SK-N-SH (cell line): ENCODE measurements at regions of chr1 and their contacts with region 1.

Region 1: GRCh38 chr1:32051706-32052105 is 21.0 kb upstream of the TMEM39B start:
- DNase-seq: no peak
- H3K4me3 ChIP-seq: no peak overlapping the region
- H3K27ac ChIP-seq: peak overlapping the region in 1 of 2 experiments; percentile 7; a peak in 1 of 4 replicates
- H3K4me1 ChIP-seq: no peaks in the 10 kb centered on the region; a peak in 2 of 4 replicates
- H3K27me3 ChIP-seq: no peaks in the 10 kb centered on the region
- CTCF ChIP-seq: no peak
- EP300 ChIP-seq: no peak
- RAD21 ChIP-seq: no peak

Region 2: DNA sequence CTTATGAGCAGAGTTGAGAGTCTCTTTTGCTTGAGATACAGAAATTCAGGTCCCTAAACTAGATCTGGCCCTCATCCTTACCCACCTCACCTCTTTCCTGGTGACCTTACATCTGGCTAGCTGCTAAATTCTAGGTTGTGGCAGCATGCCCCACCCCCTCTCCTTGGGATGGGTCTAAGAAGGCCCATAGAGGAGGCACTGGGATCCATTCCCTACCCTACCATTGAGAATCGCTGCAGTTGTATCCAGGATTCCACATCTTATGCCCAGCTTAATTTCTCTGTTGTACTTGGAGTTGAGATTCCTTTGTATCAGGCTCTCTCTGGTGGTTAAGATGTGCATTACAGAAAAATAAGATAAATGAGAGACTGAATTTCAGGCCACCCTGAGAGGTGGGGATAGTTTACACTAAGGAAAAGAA is 11.6 kb after region 1 on chr1:
- CTCF ChIA-PET with region 1: interaction called, 10 read pairs
- POLR2A ChIA-PET with region 1: interaction called, 9 read pairs
- DNase-seq: peak; percentile 55
- H3K4me3 ChIP-seq: no peak overlapping the region
- H3K27ac ChIP-seq: peak overlapping the region; percentile 45 to 88
- H3K4me1 ChIP-seq: peaks cover 12 to 40% of the 10 kb centered on the region in 2 experiments; a peak in 3 of 4 replicates
- H3K27me3 ChIP-seq: no peaks in the 10 kb centered on the region
- CTCF ChIP-seq: peak; percentile 68
- EP300 ChIP-seq: no peak
- RAD21 ChIP-seq: peak; percentile 72

Region 3: DNA sequence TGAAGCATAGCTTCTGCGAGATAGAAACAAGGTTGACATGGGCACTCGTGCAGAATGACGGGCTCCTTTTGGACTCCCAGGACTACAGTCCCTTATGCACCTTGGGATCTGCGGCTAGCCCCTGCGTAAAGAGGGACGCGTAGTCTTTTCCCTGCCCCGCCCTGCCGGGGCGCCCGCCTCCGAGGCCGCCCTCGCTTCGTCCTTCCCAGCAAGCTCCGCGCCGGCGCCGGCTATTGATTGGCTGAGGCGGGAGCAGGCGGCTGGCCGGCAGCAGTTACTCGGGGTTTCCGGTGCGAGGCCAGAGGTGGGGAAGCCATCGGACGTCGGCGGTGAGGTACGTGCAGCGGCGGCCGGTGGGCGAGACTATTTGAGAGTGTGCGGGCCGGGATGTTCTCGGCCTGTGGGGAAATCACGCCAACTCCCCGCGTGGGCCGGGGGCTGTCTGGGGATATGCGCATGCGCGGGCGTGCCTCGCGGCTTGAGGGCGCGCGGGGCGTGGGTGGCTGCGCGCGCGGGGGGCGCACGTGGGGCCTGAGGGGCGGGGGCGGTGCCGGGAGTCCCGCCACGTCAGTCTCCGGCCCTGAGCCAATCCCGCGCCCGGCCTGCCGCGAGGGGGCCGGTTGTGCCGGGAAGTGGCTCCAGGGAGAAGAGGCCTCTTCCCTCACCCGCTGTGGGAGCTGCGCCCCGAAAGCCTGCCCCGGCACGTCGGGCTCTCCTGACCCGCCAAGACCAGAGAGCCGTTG is 127.9 kb after region 1 on chr1 and contains the start of gene TXLNA:
- CTCF ChIA-PET with region 1: no interaction called
- POLR2A ChIA-PET with region 1: no interaction called
- DNase-seq: peak; percentile 98
- H3K4me3 ChIP-seq: peak within 1 kb of the TSS; percentile 65 to 82
- H3K27ac ChIP-seq: peak within 1 kb of the TSS; percentile 90 to 96
- H3K4me1 ChIP-seq: peaks cover 18 to 25% of the 10 kb centered on the region in 2 experiments; a peak in 3 of 4 replicates
- H3K27me3 ChIP-seq: no peaks in the 10 kb centered on the region
- CTCF ChIP-seq: no peak; the same call in 1 of the 2 replicates
- EP300 ChIP-seq: no peak
- RAD21 ChIP-seq: no peak
- polyA plus RNA-seq, gene TXLNA: 26.4 and 32.7 TPM in 2 replicates